ENCODE measurements at regions of chr14 and their contacts with region 1.

Region 1: DNA sequence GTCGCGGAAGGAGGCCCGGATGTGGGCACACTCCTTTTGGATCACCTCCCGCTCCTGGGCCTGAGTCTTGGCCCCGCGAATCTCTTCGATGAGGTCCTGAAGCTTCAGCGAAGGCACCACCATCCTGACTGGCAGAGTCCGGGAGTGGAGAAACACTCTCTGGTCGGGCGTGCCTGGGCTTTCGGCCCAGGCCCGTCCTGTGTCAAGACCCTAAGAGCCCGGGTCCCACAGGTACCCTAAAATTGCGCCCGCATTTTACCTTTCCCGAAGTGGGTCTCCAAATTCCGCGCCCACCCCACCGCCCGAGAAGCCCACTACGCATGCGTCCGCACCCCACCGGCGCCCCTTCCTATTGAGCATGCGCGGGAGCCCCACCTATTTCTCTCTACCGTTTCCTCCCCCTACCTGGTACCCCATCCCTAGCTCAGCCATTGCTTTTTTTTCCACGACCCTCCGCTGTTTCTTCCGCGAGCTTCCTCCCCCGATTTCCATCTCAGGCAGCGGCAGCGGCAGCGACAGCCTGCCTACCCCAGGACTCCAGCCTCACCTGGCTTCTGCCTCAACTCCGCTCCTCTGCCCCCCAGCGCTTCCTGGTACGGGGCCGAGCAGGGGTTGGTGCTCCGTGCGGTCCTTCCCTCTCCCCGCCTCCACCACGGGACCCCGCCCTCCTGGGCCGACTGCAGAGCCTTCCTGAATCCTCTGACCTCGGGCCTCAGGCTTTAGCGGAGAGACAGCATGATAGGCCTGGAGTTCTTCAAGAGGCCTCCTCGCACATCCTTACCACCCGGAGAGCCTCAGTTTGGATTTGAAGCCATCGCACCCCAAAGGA is at the start of gene AP1G2:
- DNase-seq: peak; percentile 89
- ATAC-seq: peak; percentile 91
- total RNA-seq, gene AP1G2: 59.6 TPM

Region 2: GRCh38 chr14:23483236-23483854 is 84.1 kb before region 1 on chr14:
- intact Hi-C with region 1: loop called (anchors 5 kb)
- DNase-seq: no peak
- ATAC-seq: peak; percentile 52